ENCODE measurements at regions of chr14 and their contacts with region 1.

Region 1: DNA sequence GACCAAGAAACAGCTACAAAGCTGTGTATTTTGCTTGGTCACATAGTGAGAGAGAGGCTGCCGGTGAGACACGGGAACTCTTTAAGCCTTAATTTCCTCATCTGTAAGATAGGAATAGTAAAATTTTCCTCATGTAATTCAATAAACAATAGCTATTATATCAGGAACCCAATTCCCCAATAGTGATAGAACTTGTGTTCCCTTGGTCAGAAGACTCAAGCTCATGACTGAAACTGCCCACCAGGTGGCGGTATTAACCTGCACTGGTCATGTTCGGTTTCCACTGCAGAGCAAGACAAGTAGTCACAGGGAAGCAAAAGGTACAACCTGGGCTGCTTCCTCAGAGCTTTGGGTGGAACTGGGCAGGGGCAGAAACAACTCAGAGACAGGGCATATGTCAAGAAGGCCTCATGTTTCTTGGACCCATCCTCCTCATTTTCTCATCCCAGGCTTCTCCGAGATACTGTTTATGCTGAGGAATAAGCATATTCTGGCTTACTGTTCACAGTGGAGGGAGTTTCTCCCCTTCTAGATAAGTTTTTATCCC is 4.2 kb upstream of the AJUBA start:
- DNase-seq: peak; percentile 93
- ATAC-seq: peak; percentile 50
- H3K4me3 Mint-ChIP-seq: no peak overlapping the region
- H3K27ac Mint-ChIP-seq: no peak overlapping the region
- H3K4me1 Mint-ChIP-seq: no peaks in the 10 kb centered on the region
- H3K27me3 Mint-ChIP-seq: no peaks in the 10 kb centered on the region

Region 2: GRCh38 chr14:22872033-22872832 is 114.3 kb before region 1 on chr14:
- CTCF ChIA-PET with region 1: interaction called, 12 read pairs
- POLR2A ChIA-PET with region 1: no interaction called
- DNase-seq: peak; percentile 78
- ATAC-seq: peak; percentile 52
- H3K4me3 Mint-ChIP-seq: peak overlapping the region; percentile 84
- H3K27ac Mint-ChIP-seq: peak overlapping the region; percentile 97
- H3K4me1 Mint-ChIP-seq: peaks cover 24% of the 10 kb centered on the region
- H3K27me3 Mint-ChIP-seq: no peaks in the 10 kb centered on the region

Region 3: DNA sequence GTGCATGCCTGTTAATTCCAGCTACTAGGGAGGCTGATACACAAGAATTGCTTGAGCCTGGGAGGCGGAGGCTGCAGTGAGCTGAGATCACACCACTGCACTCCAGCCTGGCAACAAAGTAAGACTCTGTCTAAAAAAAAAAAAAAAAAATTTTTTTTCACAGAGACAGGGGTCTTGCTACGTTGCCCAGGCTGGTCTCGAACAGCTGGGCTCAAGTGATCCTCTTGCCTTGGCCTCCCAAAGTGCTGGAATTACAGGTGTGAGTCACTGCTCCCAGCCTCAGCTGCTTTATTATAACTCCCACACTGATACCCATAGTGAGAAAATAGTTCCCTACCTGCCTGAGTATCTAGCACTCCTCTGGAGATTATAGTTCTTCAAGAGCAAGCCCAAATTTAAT is 40.9 kb before region 1 on chr14:
- CTCF ChIA-PET with region 1: interaction called, 97 read pairs
- POLR2A ChIA-PET with region 1: no interaction called
- DNase-seq: no peak
- ATAC-seq: no peak
- H3K4me3 Mint-ChIP-seq: no peak overlapping the region
- H3K27ac Mint-ChIP-seq: no peak overlapping the region
- H3K4me1 Mint-ChIP-seq: no peaks in the 10 kb centered on the region
- H3K27me3 Mint-ChIP-seq: no peaks in the 10 kb centered on the region

Region 4: DNA sequence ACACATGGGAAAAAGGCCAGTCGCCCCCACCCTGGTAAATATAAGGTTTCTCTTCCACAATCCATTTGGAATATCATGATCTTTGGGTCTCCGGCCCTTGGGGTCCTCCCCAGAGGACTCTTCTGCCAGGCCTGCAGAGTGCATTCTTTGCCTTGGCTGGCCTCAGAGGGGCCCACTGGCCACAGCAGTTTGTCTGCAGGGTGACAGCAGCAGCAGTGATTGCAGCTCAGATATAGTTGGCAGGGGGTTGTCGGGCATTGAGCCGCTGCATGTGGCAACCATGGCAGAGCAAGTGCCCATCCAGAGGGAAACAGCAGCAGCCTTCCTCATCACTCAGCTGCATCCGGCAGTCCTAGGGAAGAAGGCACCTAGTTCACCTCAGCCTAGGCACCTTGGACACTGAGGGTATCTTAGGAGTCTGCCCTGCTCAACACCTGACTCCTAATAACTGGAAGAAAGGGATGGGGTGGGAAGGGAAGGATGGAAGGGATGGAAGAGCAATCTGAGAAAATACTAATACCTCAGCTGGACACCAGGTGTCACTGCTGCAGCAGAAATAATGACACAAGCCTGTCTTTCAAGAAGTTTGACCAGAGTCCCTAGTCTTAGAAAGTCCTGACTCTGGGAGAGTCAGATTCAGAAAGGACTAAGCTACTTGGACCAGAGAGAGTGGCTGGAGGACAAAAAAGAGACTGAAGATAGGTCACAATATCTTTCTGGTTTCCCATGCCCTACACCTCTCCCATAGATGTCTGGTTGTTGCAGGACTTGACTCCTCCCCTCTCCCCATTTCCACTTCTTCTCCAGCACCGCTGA is 13.2 kb before region 1 on chr14:
- CTCF ChIA-PET with region 1: interaction called, 225 read pairs
- POLR2A ChIA-PET with region 1: interaction called, 3 read pairs
- DNase-seq: peak; percentile 55
- ATAC-seq: no peak
- H3K4me3 Mint-ChIP-seq: no peak overlapping the region
- H3K27ac Mint-ChIP-seq: no peak overlapping the region
- H3K4me1 Mint-ChIP-seq: no peaks in the 10 kb centered on the region
- H3K27me3 Mint-ChIP-seq: peaks cover 7% of the 10 kb centered on the region

Region 5: DNA sequence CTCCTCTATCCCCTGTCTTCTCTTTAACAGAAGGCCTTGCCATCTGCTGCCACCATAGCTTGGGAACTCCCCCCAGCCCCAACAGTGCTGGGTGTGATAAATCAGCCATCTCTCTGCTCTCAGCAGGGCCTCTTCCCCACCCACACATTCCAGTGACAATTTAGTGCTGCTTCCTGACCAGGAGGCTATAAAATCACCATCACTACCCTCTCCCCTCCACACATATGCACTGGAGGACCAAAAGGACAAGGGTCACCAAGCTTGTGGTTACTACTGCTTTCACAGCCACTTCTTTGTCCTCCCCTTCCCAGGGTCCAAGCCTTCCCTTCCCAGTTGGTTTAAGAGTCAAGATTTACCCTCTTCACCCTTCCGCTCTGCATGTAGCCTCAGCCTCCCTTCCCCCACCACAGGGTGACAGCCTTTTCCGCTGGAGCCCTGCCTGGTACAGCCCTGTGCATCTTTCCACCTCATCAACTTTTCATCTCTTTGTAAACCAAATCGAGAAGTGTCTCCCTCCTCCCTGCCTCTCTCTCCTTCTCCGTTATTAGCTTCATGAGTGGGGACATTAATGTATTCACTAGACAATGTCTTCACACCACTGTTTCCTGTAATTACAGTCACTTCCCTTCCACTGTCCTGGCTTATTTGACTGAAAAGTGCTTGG is 38.7 kb after region 1 on chr14:
- CTCF ChIA-PET with region 1: interaction called, 16 read pairs
- POLR2A ChIA-PET with region 1: no interaction called
- DNase-seq: no peak
- ATAC-seq: no peak
- H3K4me3 Mint-ChIP-seq: no peak overlapping the region
- H3K27ac Mint-ChIP-seq: peak overlapping the region; percentile 40
- H3K4me1 Mint-ChIP-seq: peaks cover 50% of the 10 kb centered on the region
- H3K27me3 Mint-ChIP-seq: no peaks in the 10 kb centered on the region

Region 6: GRCh38 chr14:23068476-23069412 is 82.2 kb after region 1 on chr14:
- CTCF ChIA-PET with region 1: interaction called, 489 read pairs
- POLR2A ChIA-PET with region 1: no interaction called
- DNase-seq: peak; percentile 88
- ATAC-seq: peak; percentile 75
- H3K4me3 Mint-ChIP-seq: peak overlapping the region; percentile 9
- H3K27ac Mint-ChIP-seq: peak overlapping the region; percentile 10
- H3K4me1 Mint-ChIP-seq: peaks cover 33% of the 10 kb centered on the region
- H3K27me3 Mint-ChIP-seq: no peaks in the 10 kb centered on the region

Region 7: DNA sequence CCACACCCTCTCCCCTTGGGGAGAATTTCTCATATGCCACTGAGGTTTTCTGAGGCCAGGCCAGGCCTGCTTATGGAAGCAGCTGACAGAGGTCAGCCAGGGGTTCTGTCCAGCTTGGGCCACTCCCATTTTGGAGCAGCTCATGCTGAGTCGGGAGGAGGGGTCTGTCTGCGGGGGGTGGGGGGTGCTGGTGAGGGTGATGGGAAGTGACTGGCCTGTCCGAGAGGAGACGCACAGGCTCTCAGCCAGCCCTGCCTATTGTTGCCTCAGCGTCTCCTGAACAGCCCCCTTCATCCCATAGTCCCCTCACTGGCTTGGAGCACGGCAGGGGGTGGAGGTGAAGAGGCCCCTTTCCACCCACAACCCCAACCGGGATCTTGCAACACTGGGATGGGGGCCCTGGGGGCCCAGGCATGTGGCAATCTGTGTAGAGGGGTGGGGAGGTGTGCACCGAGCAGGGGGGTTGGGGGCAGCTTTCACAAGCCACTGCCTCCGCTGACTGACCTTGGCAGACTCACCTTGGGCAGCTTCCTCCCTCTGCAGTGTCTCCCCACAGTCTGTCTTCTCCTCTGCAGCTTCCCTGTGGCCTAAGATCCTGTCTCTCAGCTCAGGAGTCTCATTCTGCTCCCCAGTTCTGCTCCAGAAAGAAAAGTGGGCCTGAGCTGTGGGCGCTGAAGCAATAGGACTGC is 127.0 kb after region 1 on chr14:
- CTCF ChIA-PET with region 1: interaction called, 10 read pairs
- POLR2A ChIA-PET with region 1: no interaction called
- DNase-seq: no peak
- ATAC-seq: no peak
- H3K4me3 Mint-ChIP-seq: no peak overlapping the region
- H3K27ac Mint-ChIP-seq: no peak overlapping the region
- H3K4me1 Mint-ChIP-seq: peaks cover 7% of the 10 kb centered on the region
- H3K27me3 Mint-ChIP-seq: no peaks in the 10 kb centered on the region

Region 8: DNA sequence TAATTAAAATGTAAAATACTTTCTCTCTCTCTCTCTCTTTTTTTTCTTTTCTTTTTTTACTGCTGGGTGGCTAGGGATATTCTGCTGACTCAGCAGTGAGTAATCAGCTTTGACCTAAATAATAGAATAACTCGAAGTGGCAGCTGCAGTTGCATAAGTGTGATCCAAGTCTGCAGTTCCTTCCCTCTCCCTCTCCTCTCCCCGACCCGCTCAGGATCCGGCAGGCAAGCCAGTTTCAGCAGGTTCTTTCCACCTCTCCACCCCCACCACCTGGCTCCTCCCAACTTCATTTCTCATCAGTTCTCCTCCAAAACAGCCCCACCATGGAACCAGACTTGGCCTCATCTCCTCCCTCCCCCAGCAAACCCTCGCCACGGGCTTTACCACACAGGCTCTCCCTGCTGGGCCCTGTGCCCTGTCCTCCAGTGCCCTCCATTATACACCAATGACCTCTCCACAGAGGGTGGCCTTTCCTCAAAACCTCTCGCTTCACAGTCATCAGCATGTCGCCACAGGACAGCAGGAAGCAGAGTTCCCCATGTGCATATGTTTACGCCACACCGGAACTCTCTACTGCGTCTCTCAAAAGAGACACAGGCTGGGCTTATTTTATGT is 174.4 kb after region 1 on chr14:
- CTCF ChIA-PET with region 1: no interaction called
- POLR2A ChIA-PET with region 1: no interaction called
- DNase-seq: no peak
- ATAC-seq: no peak
- H3K4me3 Mint-ChIP-seq: no peak overlapping the region
- H3K27ac Mint-ChIP-seq: no peak overlapping the region
- H3K4me1 Mint-ChIP-seq: peaks cover 11% of the 10 kb centered on the region
- H3K27me3 Mint-ChIP-seq: peaks cover 3% of the 10 kb centered on the region

Measured in activated CD8-positive, alpha-beta T cell treated with anti-CD3 and anti-CD28 coated beads, Interleukin-2, amount 10 ng/mL, durations not matched to agents 7 days and 5 days (primary cell).